ENCODE measurements at regions of chr19 and their contacts with region 1.

Region 1: GRCh38 chr19:55599468-55600279 is at the start of gene FIZ1:
- DNase-seq: peak; percentile 92
- ATAC-seq: peak; percentile 69
- H3K4me3 Mint-ChIP-seq: peak within 1 kb of the TSS; percentile 99
- H3K27ac Mint-ChIP-seq: peak within 1 kb of the TSS; percentile 99
- H3K4me1 Mint-ChIP-seq: peaks cover 19% of the 10 kb centered on the region
- H3K27me3 Mint-ChIP-seq: no peaks in the 10 kb centered on the region
- CTCF ChIP-seq: no peak
- total RNA-seq, gene FIZ1: 17.5 and 21.2 TPM in 2 replicates

Region 2: DNA sequence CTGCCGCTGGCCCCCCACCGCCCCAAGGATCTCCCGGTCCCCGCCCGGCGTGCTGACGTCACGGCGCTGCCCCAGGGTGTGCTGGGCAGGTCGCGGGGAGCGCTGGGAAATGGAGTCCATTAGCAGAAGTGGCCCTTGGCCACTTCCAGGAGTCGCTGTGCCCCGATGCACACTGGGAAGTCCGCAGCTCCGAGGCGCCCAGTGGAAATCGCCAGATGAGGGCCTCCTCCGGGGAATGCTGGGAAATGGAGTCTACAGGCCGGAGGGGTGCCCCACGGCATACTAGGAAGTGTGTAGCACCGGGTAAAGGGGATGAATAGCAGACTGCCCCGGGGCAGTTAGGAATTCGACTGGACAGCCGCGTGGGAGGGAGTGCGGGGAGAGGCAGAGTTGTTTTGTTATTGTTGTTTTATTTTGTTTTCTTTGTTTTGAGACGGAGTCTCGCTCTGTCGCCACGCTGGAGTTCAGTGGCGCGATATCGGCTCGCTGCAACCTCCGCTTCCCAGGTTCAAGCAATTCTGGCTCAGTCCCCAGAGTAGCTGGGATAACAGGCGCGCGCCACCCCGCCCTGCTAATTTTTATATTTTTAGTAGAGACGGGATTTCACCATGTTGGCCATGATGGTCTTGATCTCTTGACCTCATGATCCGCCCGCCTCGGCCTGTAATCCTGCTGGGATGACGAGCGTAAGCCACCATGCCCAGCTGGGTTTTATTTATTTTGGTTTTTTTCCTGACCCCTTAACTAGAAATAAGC is 481.9 kb before region 1 on chr19 and contains the start of gene PPP1R12C:
- CTCF ChIA-PET with region 1: no interaction called
- POLR2A ChIA-PET with region 1: interaction called, 12 read pairs
- intact Hi-C with region 1: no loop called
- DNase-seq: peak; percentile 96
- ATAC-seq: peak; percentile 93
- H3K4me3 Mint-ChIP-seq: peak within 1 kb of the TSS; percentile 97
- H3K27ac Mint-ChIP-seq: peak within 1 kb of the TSS; percentile 87
- H3K4me1 Mint-ChIP-seq: peaks cover 55% of the 10 kb centered on the region
- H3K27me3 Mint-ChIP-seq: no peaks in the 10 kb centered on the region
- CTCF ChIP-seq: no peak
- total RNA-seq, gene PPP1R12C: 115 and 139 TPM in 2 replicates

Region 3: GRCh38 chr19:55339048-55339888 is 260.4 kb before region 1 on chr19 and contains the start of gene KMT5C:
- CTCF ChIA-PET with region 1: no interaction called
- POLR2A ChIA-PET with region 1: interaction called, 16 read pairs
- intact Hi-C with region 1: loop called (anchors 1 kb)
- DNase-seq: peak; percentile 99
- ATAC-seq: peak; percentile 81
- H3K4me3 Mint-ChIP-seq: peak within 1 kb of the TSS; percentile 95
- H3K27ac Mint-ChIP-seq: peak within 1 kb of the TSS; percentile 90
- H3K4me1 Mint-ChIP-seq: peaks cover 31% of the 10 kb centered on the region
- H3K27me3 Mint-ChIP-seq: peaks cover 7% of the 10 kb centered on the region
- CTCF ChIP-seq: no peak
- total RNA-seq, gene KMT5C: 7.2 and 8.1 TPM in 2 replicates

Region 4: GRCh38 chr19:55407800-55408532 is 191.7 kb before region 1 on chr19:
- CTCF ChIA-PET with region 1: no interaction called
- POLR2A ChIA-PET with region 1: interaction called, 13 read pairs
- intact Hi-C with region 1: no loop called
- DNase-seq: peak; percentile 95
- ATAC-seq: peak; percentile 88
- H3K4me3 Mint-ChIP-seq: peak overlapping the region; percentile 91
- H3K27ac Mint-ChIP-seq: peak overlapping the region; percentile 98
- H3K4me1 Mint-ChIP-seq: peaks cover 24% of the 10 kb centered on the region
- H3K27me3 Mint-ChIP-seq: no peaks in the 10 kb centered on the region
- CTCF ChIP-seq: no peak

Region 5: GRCh38 chr19:55516878-55517620 is 82.6 kb before region 1 on chr19:
- CTCF ChIA-PET with region 1: no interaction called
- POLR2A ChIA-PET with region 1: interaction called, 10 read pairs
- intact Hi-C with region 1: loop called (anchors 1 kb)
- DNase-seq: peak; percentile 92
- ATAC-seq: peak; percentile 100
- H3K4me3 Mint-ChIP-seq: peak overlapping the region; percentile 76
- H3K27ac Mint-ChIP-seq: peak overlapping the region; percentile 87
- H3K4me1 Mint-ChIP-seq: peaks cover 3% of the 10 kb centered on the region
- H3K27me3 Mint-ChIP-seq: peaks cover 10% of the 10 kb centered on the region
- CTCF ChIP-seq: no peak

Region 6: DNA sequence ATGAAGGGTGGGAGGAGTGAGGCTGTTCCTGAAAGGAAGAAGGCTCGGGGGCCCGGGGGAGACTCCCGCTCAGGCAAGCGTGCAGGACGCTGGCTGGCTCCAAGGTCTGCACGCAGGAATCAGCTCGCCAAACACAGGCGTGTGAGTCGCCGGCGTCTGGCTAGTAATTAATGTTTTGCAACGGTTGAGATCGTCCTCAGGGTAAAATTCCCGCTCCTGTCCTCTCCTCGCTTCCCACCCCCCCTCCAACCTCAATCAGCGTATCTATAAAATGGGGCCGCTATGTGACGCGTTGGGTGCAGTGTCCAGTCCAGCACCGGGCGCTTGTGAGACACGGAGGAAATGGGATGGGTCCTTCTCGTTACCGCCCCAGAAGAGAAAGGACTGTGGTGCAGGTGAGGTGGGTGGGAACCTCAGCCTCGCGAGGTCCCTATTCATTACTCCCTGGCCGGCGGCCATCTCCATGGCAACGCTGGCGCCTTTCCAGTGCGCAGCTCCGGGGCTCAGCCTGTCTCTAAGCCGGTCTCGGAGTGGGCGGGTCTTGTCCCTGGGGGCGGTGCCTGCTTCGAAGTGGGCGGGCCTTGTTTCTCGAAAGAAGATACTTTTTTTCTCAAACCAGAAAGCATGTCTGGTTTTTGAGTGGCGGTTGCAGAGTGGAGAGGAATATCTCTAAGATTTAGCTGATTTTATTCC is 12.6 kb before region 1 on chr19:
- CTCF ChIA-PET with region 1: no interaction called
- POLR2A ChIA-PET with region 1: interaction called, 42 read pairs
- intact Hi-C with region 1: loop called (anchors 1 kb)
- DNase-seq: peak; percentile 89
- ATAC-seq: peak; percentile 96
- H3K4me3 Mint-ChIP-seq: peak overlapping the region; percentile 85
- H3K27ac Mint-ChIP-seq: peak overlapping the region; percentile 72
- H3K4me1 Mint-ChIP-seq: peaks cover 29% of the 10 kb centered on the region
- H3K27me3 Mint-ChIP-seq: no peaks in the 10 kb centered on the region
- CTCF ChIP-seq: no peak

Region 7: DNA sequence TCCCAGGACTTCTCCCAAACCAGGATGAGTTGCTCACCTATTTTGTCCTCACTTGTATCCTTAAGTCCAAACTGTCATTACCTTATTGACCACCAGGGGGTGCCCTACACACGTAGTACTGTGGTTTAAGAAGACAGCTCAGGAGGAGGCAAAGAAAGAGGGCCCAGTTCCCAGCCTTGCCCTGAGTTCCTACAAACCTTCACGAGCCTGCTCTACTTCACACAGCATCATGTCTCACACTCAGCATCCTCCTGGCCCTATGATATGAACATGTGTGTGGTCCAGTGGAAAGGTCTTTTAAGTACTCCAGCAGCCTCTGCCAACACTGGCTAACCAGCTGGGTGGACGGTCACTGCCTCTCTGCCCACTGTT is 32.8 kb after region 1 on chr19:
- CTCF ChIA-PET with region 1: interaction called, 38 read pairs
- POLR2A ChIA-PET with region 1: interaction called, 18 read pairs
- intact Hi-C with region 1: loop called (anchors 2 kb)
- DNase-seq: peak; percentile 44
- ATAC-seq: peak; percentile 57
- H3K4me3 Mint-ChIP-seq: peak overlapping the region; percentile 60
- H3K27ac Mint-ChIP-seq: peak overlapping the region; percentile 37
- H3K4me1 Mint-ChIP-seq: peaks cover 40% of the 10 kb centered on the region
- H3K27me3 Mint-ChIP-seq: no peaks in the 10 kb centered on the region
- CTCF ChIP-seq: no peak

Measured in activated B cell treated with CpG ODN at 0.5 μM for 24 hours (primary cell).